Colonic mucosa (tissue), 4 donors: ENCODE measurements at regions of chr12 and their contacts with region 1.

Region 1: DNA sequence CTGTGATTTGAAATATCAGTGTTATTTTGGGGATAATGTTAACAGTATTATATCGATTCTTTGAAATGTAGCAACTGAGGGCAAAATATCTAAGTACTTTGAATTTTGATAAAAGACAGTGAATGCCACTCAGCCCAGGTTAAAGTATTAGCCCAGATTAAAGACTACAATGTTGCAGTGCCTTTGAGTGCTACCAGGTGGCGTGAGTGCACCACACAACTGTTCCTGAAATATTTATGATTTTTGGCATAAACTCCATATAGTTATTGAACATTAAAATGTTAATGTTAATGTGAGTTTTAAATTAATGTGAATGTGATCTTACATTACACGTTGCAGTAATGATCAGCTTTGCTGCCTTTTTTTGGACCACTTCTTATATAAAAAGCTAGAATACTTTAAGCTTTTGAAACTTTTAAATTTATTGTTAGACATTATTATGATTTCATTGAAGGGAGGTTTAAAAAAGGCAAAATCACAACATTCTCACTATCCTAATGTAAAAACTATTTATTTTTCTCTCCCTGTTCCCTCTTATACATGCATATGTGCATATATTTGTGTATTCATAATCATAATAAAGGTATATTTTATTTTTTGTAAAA is 22.5 kb downstream of the MRPS35 start:
- DNase-seq: no peak
- H3K4me3 ChIP-seq: no peak overlapping the region
- H3K27ac ChIP-seq: no peak overlapping the region
- H3K4me1 ChIP-seq: no peaks in the 10 kb centered on the region
- H3K27me3 ChIP-seq: no peaks in the 10 kb centered on the region
- CTCF ChIP-seq: peak; percentile 74

Region 2: GRCh38 chr12:27779920-27780611 is 46.9 kb after region 1 on chr12 and contains the starts of genes KLHL42 and MANSC4:
- intact Hi-C with region 1: loop called (anchors 10 kb)
- DNase-seq: peak; percentile 64
- H3K4me3 ChIP-seq: peak within 1 kb of the TSS; percentile 78
- H3K27ac ChIP-seq: peak within 1 kb of the TSS; percentile 93
- H3K4me1 ChIP-seq: peaks cover 4% of the 10 kb centered on the region
- H3K27me3 ChIP-seq: no peaks in the 10 kb centered on the region
- CTCF ChIP-seq: no peak
- total RNA-seq, gene KLHL42: 16.5 to 20.1 TPM
- total RNA-seq, gene MANSC4: not detected

Region 3: GRCh38 chr12:27822076-27822712 is 89.0 kb after region 1 on chr12:
- intact Hi-C with region 1: loop called (anchors 2 kb)
- DNase-seq: no peak
- H3K4me3 ChIP-seq: no peak overlapping the region
- H3K27ac ChIP-seq: no peak overlapping the region
- H3K4me1 ChIP-seq: no peaks in the 10 kb centered on the region
- H3K27me3 ChIP-seq: no peaks in the 10 kb centered on the region
- CTCF ChIP-seq: no peak

Region 4: DNA sequence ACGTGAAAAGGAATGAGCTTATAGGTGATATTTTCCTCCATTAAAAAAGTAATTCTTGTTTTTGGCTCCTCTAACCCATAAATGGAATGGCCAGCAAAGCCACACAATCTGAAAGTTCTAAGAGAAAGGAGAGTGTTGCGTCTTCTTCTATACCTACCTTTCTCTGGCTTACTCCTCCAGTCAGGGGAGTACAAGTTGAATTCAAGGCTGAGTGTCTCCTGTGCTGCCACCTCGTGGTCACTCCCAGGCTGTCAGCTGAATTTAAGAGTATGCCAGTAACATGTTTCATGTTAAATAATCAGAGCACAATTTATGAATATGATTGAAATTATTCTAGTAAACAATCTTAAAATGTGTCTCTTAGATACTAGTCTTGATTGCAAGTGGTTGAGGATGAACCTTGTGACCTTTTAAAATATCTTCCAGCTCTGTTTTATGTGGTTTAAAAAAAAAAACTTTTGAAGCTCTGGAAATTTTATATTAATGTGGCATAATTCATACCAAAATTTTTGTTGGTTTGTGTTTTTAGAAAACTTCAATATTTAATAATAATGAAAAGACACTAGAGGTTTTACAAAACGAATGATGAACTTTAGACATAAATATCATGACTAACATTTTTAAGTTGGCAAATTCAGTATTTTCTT is 207.7 kb after region 1 on chr12:
- intact Hi-C with region 1: loop called (anchors 2 kb)
- DNase-seq: peak; percentile 68
- H3K4me3 ChIP-seq: no peak overlapping the region
- H3K27ac ChIP-seq: no peak overlapping the region
- H3K4me1 ChIP-seq: no peaks in the 10 kb centered on the region
- H3K27me3 ChIP-seq: no peaks in the 10 kb centered on the region
- CTCF ChIP-seq: peak; percentile 73